Activated CD4-positive, alpha-beta T cell treated with anti-CD3 and anti-CD28 coated beads for 36 hours (primary cell): ENCODE measurements at regions of chr1 and their contacts with region 1.

Region 1: DNA sequence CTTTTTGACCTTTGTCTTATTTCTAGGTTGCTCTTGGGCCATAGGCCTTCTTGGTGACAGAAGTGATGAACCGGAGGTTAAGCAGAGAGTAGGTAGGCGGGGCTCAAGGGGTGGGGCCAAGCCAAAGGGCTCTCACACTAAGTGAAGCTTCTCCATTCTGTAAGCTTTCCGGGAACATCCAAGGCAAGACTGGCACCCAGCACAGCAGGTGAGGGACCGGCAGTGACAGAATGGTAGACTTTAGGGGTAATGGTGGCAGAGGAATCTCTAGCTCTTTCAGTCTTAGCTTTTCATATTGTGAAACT is at the start of gene TNFAIP8L2:
- DNase-seq: peak; percentile 91
- ATAC-seq: peak; percentile 85
- H3K4me3 Mint-ChIP-seq: peak within 1 kb of the TSS; percentile 88
- H3K27ac Mint-ChIP-seq: peak within 1 kb of the TSS; percentile 99
- H3K4me1 Mint-ChIP-seq: peaks cover 44% of the 10 kb centered on the region
- H3K27me3 Mint-ChIP-seq: no peaks in the 10 kb centered on the region
- total RNA-seq, gene TNFAIP8L2: 18.4 to 19.2 TPM

Region 2: DNA sequence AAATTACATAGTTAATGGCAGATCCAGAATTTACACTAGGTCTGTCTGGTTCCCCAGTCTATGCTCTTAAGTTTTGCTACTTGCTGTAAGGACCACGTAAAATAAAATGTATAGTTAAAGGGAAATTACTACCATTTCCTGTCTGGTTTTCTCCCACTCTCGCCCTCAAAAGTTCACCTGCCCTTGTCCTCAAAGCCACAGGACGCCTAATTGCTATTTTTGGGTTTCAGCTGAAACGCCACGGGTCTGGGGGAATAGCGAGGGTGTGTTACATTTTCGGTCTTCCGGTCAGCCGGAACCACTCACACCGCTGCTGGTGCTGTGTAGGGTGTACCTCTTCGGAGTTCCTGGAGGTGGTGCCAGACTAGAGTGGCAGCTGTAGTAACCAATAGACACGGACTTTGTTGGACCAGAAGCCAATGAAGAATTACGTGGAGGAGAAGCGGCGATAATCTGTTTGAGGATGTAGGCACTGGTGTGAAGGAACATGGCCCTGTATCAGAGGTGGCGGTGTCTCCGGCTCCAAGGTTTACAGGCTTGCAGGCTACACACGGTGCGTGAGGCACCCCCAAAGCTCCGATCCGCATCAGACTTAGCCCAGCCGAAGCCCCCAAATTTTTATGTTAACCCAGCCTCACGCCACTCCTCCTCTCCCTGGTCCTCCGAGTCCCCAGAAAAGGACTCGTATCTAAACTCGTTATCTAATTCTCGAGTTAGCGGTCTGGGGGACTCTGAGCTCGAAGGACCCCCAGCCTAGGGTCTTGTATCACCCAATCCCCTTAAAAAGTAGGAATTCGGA is 669.3 kb before region 1 on chr1 and contains the start of gene TARS2:
- CTCF ChIA-PET with region 1: no interaction called
- POLR2A ChIA-PET with region 1: no interaction called
- intact Hi-C with region 1: no loop called
- DNase-seq: peak; percentile 96
- ATAC-seq: peak; percentile 100
- H3K4me3 Mint-ChIP-seq: peak within 1 kb of the TSS; percentile 96
- H3K27ac Mint-ChIP-seq: peak within 1 kb of the TSS; percentile 99
- H3K4me1 Mint-ChIP-seq: peaks cover 13% of the 10 kb centered on the region
- H3K27me3 Mint-ChIP-seq: no peaks in the 10 kb centered on the region
- total RNA-seq, gene TARS2: 43.8 to 58.6 TPM

Region 3: DNA sequence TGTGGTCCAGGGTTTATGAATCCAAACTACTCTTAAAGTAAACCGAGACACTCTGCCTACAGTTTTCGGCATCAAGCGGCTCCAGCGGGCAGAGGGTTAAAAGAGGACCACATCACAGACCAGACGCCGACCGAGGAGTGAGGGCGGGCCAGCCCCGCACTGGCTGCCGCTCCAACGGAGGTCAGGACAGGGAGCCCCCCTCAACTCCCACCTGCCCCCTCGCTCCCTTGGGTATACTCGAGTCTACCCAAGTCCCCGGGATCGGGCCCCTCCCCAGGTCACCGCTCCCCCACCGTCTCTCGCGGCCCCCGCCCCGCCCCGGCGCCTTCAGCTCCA is 280.4 kb before region 1 on chr1:
- CTCF ChIA-PET with region 1: no interaction called
- POLR2A ChIA-PET with region 1: no interaction called
- intact Hi-C with region 1: loop called in 1 of 2 experiments (anchors 2 kb)
- DNase-seq: no peak
- ATAC-seq: peak; percentile 37
- H3K4me3 Mint-ChIP-seq: peak overlapping the region; percentile 88
- H3K27ac Mint-ChIP-seq: peak overlapping the region; percentile 95
- H3K4me1 Mint-ChIP-seq: peaks cover 25% of the 10 kb centered on the region
- H3K27me3 Mint-ChIP-seq: no peaks in the 10 kb centered on the region

Region 4: DNA sequence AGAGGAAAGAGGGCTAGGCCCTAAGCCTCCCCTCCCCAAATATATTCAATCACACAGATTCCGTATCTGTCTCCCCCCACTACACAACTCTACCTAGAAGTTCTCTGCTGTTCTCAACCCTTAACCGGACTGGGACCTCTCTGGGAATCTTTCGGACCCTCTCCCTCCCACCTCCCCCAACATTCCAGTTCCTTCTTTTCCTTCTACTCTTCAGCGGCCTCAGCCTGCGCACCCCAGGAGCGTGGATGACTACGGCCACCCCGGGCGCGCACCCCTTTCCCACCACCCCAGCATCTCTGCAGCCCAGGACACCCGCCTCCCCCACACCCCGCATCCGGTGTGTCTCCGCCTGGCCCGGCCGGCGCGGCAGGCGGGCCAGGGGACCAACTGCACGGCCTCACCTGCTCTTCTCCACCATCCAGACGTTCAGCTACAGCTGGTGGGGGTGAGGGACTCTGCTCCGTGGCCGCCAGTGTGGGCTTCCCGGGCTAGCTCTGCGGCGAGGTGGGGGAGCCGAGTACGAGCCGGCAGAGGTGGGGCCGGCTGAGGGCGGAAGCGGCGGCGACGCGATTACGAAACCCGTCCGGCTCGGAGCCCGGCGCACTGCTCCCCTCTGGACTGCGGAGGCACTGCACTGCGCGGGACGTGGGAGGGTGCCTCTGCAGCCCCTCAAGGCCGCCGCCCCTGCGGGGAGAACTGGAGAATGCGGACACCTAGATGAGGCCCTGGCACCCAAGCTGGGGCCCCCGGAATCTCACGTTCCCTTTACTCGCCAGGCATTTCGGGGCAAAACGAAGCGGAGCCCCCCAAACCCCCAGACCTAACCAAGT is 97.2 kb before region 1 on chr1 and contains the start of gene CDC42SE1:
- CTCF ChIA-PET with region 1: interaction called, 4 read pairs
- POLR2A ChIA-PET with region 1: interaction called, 6 read pairs
- intact Hi-C with region 1: loop called (anchors 1 to 2 kb)
- DNase-seq: peak; percentile 92
- ATAC-seq: peak; percentile 75
- H3K4me3 Mint-ChIP-seq: peak within 1 kb of the TSS; percentile 93
- H3K27ac Mint-ChIP-seq: peak within 1 kb of the TSS; percentile 98
- H3K4me1 Mint-ChIP-seq: peaks cover 54% of the 10 kb centered on the region
- H3K27me3 Mint-ChIP-seq: no peaks in the 10 kb centered on the region
- total RNA-seq, gene CDC42SE1: 95.4 to 101 TPM

Region 5: DNA sequence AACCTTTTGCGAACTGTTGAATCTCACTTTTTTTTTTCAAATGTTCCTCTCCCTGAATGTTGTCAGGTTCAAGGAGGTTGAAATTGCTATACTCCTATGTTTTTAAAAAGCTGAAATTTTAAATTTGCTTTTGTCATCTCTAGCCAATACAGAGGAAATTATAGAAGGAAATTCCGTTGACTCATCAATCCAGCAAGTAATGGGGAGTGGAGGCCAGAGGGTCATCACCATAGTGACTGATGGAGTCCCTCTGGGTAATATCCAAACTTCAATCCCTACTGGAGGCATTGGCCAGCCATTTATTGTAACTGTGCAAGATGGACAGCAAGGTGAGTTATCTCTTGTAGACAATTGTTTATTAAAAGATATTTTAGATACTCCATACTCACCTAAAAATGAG is 49.6 kb before region 1 on chr1:
- CTCF ChIA-PET with region 1: interaction called, 195 read pairs
- POLR2A ChIA-PET with region 1: no interaction called
- intact Hi-C with region 1: no loop called
- DNase-seq: no peak
- ATAC-seq: no peak
- H3K4me3 Mint-ChIP-seq: no peak overlapping the region
- H3K27ac Mint-ChIP-seq: no peak overlapping the region
- H3K4me1 Mint-ChIP-seq: no peaks in the 10 kb centered on the region
- H3K27me3 Mint-ChIP-seq: no peaks in the 10 kb centered on the region

Region 6: DNA sequence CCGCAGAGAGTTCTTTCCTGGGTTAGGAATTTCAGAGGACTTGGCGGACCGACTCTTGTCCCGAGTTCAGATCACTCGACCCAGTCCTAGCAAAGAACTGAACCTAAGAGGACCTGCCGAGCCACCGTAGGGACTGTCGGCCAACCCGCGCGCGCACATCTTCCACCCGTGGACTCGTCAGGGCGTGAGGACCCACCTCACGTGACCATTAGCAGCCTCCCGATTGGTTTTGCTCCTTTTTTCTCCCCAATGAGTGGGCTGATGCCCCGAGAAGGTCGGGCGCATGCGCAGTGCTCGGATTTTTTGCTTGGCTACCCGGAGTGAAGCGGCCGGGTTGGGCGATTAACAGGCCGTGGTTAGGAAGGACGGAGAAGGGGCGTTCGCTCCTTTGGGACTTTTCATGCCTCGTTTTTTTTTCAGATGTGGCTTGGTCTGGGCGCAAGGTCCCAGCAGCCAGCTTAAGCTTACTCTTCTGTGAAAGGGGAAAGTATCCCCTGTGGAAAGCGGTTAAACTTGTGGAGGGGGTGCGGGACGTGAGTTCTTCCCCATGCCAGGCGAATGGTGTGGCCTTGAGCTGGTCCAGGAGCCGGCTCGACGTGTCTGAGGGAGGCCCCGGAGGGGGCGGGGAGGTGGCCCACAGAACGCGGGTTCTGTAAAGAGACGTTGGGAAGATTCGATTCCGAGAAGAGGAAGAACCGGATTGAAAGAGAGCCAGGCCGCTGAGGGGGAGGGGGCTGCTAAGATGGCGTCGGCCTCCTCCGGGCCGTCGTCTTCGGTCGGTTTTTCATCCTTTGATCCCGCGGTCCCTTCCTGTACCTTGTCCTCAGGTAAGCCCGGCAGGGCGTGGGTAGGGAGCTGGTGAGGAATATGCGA is 42.0 kb after region 1 on chr1 and contains the start of gene PIP5K1A:
- CTCF ChIA-PET with region 1: interaction called, 4 read pairs
- POLR2A ChIA-PET with region 1: interaction called, 4 read pairs
- intact Hi-C with region 1: loop called in 1 of 2 experiments (anchors 5 kb)
- DNase-seq: peak; percentile 100
- ATAC-seq: peak; percentile 90
- H3K4me3 Mint-ChIP-seq: peak within 1 kb of the TSS; percentile 98
- H3K27ac Mint-ChIP-seq: peak within 1 kb of the TSS; percentile 100
- H3K4me1 Mint-ChIP-seq: peaks cover 38% of the 10 kb centered on the region
- H3K27me3 Mint-ChIP-seq: no peaks in the 10 kb centered on the region
- total RNA-seq, gene PIP5K1A: 74.5 to 85.1 TPM

Region 7: GRCh38 chr1:151485685-151486255 is 329.3 kb after region 1 on chr1:
- CTCF ChIA-PET with region 1: no interaction called
- POLR2A ChIA-PET with region 1: no interaction called
- intact Hi-C with region 1: no loop called
- DNase-seq: no peak
- ATAC-seq: no peak
- H3K4me3 Mint-ChIP-seq: no peak overlapping the region
- H3K27ac Mint-ChIP-seq: no peak overlapping the region
- H3K4me1 Mint-ChIP-seq: no peaks in the 10 kb centered on the region
- H3K27me3 Mint-ChIP-seq: no peaks in the 10 kb centered on the region